PC-3 (cell line): ENCODE measurements at regions of chr5 and their contacts with region 1.

Region 1: GRCh38 chr5:172006321-172007174 is at the start of gene FBXW11:
- DNase-seq: peak; percentile 98
- ATAC-seq: peak; percentile 88
- H3K4me3 ChIP-seq: peak within 1 kb of the TSS; percentile 80
- H3K27ac ChIP-seq: peak within 1 kb of the TSS; percentile 79
- H3K4me1 ChIP-seq: peaks cover 40% of the 10 kb centered on the region
- H3K27me3 ChIP-seq: no peaks in the 10 kb centered on the region
- CTCF ChIP-seq: no peak
- total RNA-seq, gene FBXW11: 62.8 and 69.2 TPM in 2 replicates

Region 2: DNA sequence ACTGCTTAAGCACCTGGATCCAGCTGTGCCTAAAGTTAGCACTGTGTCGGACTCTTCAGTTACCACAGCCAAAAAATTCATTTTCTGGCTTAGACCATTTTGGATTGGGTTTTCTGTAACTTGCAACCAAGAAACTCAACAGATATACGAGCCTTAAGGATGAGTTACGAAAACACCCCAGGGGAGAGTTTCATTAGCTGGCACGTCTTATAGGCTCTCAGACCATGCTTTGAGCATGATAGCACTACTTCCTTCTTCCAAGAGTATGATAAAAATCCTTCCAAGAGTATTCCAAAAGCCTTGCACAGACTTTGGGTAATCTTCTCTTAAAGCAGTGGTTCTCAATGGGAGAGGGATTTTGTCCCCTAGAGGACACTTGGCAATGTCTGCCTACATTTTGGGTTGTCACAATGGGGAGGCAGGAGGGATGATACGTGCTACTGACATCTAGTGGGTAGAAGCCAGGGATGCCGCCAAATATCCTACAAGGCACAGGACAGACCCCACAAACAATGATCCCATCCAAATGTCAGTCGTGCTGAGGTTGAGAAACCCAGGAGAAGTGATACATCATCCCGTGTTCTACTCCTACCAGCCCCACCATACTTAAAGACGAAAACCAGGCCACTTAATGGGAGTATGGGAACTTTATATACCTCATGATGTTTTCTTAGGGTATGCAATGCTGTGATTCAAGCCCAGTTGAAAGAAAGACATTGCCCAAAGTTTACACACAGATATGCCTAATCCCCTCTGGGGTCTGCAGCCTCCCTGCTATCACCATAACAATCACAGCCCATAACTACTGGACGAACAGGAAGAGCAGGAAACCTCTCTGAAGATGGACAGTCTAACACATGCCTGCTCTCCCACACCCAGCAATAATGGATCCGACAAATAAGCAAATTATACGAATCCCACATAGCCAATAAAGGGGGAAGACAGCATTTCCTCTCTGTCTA is 155.9 kb before region 1 on chr5:
- CTCF ChIA-PET with region 1: no interaction called
- POLR2A ChIA-PET with region 1: no interaction called
- intact Hi-C with region 1: no loop called
- DNase-seq: peak; percentile 59
- ATAC-seq: peak; percentile 71
- H3K4me3 ChIP-seq: no peak overlapping the region
- H3K27ac ChIP-seq: no peak overlapping the region
- H3K4me1 ChIP-seq: no peaks in the 10 kb centered on the region
- H3K27me3 ChIP-seq: no peaks in the 10 kb centered on the region
- CTCF ChIP-seq: peak; percentile 78

Region 3: GRCh38 chr5:171893290-171893886 is 113.2 kb before region 1 on chr5:
- CTCF ChIA-PET with region 1: no interaction called
- POLR2A ChIA-PET with region 1: no interaction called
- intact Hi-C with region 1: no loop called
- DNase-seq: no peak
- ATAC-seq: no peak
- H3K4me3 ChIP-seq: no peak overlapping the region
- H3K27ac ChIP-seq: no peak overlapping the region
- H3K4me1 ChIP-seq: 0 out of 2 replicates have a peak, but pooled peaks cover 4% of the 10 kb centered on the region
- H3K27me3 ChIP-seq: no peaks in the 10 kb centered on the region
- CTCF ChIP-seq: no peak

Region 4: GRCh38 chr5:171957591-171958251 is 48.8 kb before region 1 on chr5:
- CTCF ChIA-PET with region 1: no interaction called
- POLR2A ChIA-PET with region 1: interaction called, 5 read pairs
- intact Hi-C with region 1: loop called (anchors 5 kb)
- DNase-seq: no peak
- ATAC-seq: no peak
- H3K4me3 ChIP-seq: no peak overlapping the region
- H3K27ac ChIP-seq: no peak overlapping the region
- H3K4me1 ChIP-seq: peaks cover 49% of the 10 kb centered on the region
- H3K27me3 ChIP-seq: no peaks in the 10 kb centered on the region
- CTCF ChIP-seq: no peak

Region 5: DNA sequence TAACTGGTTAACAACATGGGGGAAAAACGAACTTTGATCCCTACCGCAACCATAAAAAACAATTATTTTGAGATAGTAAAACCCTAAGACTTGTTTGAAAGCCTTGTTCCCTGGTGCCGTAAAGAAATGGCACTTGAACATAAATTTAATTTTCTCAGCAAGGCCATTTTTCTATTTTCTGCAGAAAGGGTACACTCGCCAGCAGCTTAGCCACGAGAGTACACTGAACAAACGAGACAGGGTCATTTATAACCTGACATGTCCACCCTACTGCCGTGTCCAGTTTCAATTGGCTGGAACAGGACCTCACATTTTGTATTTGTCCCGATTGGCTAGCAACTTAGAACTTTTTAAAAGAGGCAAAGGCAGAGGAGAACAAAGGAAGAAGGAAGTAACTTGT is 26.9 kb before region 1 on chr5:
- CTCF ChIA-PET with region 1: no interaction called
- POLR2A ChIA-PET with region 1: interaction called, 13 read pairs
- intact Hi-C with region 1: no loop called
- DNase-seq: no peak
- ATAC-seq: no peak
- H3K4me3 ChIP-seq: no peak overlapping the region
- H3K27ac ChIP-seq: no peak overlapping the region
- H3K4me1 ChIP-seq: peaks cover 6% of the 10 kb centered on the region
- H3K27me3 ChIP-seq: no peaks in the 10 kb centered on the region
- CTCF ChIP-seq: no peak

Region 6: GRCh38 chr5:172035039-172035438 is 28.5 kb after region 1 on chr5:
- CTCF ChIA-PET with region 1: no interaction called
- POLR2A ChIA-PET with region 1: no interaction called
- intact Hi-C with region 1: loop called (anchors 1 kb)
- DNase-seq: no peak
- ATAC-seq: no peak
- H3K4me3 ChIP-seq: no peak overlapping the region
- H3K27ac ChIP-seq: no peak overlapping the region
- H3K4me1 ChIP-seq: no peaks in the 10 kb centered on the region
- H3K27me3 ChIP-seq: no peaks in the 10 kb centered on the region
- CTCF ChIP-seq: no peak

Region 7: GRCh38 chr5:172479044-172479783 is 472.7 kb after region 1 on chr5:
- CTCF ChIA-PET with region 1: no interaction called
- POLR2A ChIA-PET with region 1: no interaction called
- intact Hi-C with region 1: no loop called
- DNase-seq: peak; percentile 92
- ATAC-seq: peak; percentile 99
- H3K4me3 ChIP-seq: no peak overlapping the region
- H3K27ac ChIP-seq: no peak overlapping the region
- H3K4me1 ChIP-seq: no peaks in the 10 kb centered on the region
- H3K27me3 ChIP-seq: no peaks in the 10 kb centered on the region
- CTCF ChIP-seq: peak; percentile 88